Activated naive CD4-positive, alpha-beta T cell treated with anti-CD3 and anti-CD28 coated beads for 36 hours (primary cell): ENCODE measurements at regions of chr12 and their contacts with region 1.

Region 1: GRCh38 chr12:19833775-19834501 is 394.6 kb downstream of the AEBP2 start:
- DNase-seq: peak; percentile 12
- H3K4me3 Mint-ChIP-seq: no peak overlapping the region
- H3K27ac Mint-ChIP-seq: no peak overlapping the region
- H3K4me1 Mint-ChIP-seq: peaks cover 9% of the 10 kb centered on the region
- H3K27me3 Mint-ChIP-seq: peaks cover 3% of the 10 kb centered on the region

Region 2: DNA sequence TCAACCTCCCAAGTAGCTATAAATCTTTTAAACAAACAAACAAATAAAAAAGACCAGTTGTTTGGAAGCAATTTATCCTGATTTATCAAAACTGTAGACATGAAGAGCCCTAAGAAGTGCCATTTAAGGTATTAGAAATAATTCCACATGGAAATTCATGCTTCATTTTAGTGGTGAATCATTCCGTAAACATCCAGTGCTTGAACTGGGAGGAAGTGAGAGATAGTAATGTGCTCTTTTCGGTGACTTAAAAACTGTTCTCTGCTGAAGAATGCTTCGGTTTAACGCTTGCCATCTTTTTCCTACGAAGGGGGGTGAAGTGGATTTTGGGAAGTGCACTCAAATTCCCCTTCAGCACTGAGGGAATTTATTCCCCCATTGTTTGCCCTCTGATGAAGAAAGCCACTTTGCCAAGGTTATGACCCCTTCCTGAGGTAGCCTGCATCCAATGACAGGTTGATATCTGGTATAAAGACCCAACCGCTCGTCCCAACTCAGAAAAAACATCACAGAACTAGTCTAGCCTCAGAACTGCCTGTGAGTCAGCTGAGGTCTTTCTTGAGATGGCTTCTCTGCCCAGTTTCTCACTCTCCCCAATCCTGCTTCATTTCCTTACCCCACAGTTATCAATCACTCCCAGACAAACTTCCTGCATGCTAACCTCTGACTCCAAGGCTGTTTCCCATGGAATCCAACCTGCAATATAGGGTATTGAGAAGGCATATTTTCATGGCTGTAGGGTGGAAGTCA is 150.6 kb before region 1 on chr12:
- CTCF ChIA-PET with region 1: no interaction called
- intact Hi-C with region 1: loop called (anchors 1 kb)
- DNase-seq: no peak
- H3K4me3 Mint-ChIP-seq: no peak overlapping the region
- H3K27ac Mint-ChIP-seq: no peak overlapping the region
- H3K4me1 Mint-ChIP-seq: peaks cover 32% of the 10 kb centered on the region
- H3K27me3 Mint-ChIP-seq: no peaks in the 10 kb centered on the region

Region 3: GRCh38 chr12:19739183-19739776 is 94.7 kb before region 1 on chr12:
- CTCF ChIA-PET with region 1: no interaction called
- intact Hi-C with region 1: loop called (anchors 5 kb)
- DNase-seq: peak; percentile 46
- H3K4me3 Mint-ChIP-seq: no peak overlapping the region
- H3K27ac Mint-ChIP-seq: no peak overlapping the region
- H3K4me1 Mint-ChIP-seq: no peaks in the 10 kb centered on the region
- H3K27me3 Mint-ChIP-seq: no peaks in the 10 kb centered on the region

Region 4: GRCh38 chr12:19757317-19757877 is 76.5 kb before region 1 on chr12:
- CTCF ChIA-PET with region 1: interaction called, 4 read pairs
- intact Hi-C with region 1: loop called (anchors 1 kb)
- DNase-seq: no peak
- H3K4me3 Mint-ChIP-seq: no peak overlapping the region
- H3K27ac Mint-ChIP-seq: no peak overlapping the region
- H3K4me1 Mint-ChIP-seq: no peaks in the 10 kb centered on the region
- H3K27me3 Mint-ChIP-seq: no peaks in the 10 kb centered on the region

Region 5: GRCh38 chr12:19800884-19801283 is 33.1 kb before region 1 on chr12:
- CTCF ChIA-PET with region 1: no interaction called
- intact Hi-C with region 1: loop called (anchors 2 kb)
- DNase-seq: no peak
- H3K4me3 Mint-ChIP-seq: no peak overlapping the region
- H3K27ac Mint-ChIP-seq: no peak overlapping the region
- H3K4me1 Mint-ChIP-seq: peaks cover 4% of the 10 kb centered on the region
- H3K27me3 Mint-ChIP-seq: no peaks in the 10 kb centered on the region